BJ (cell line): ENCODE measurements at regions of chr2 and their contacts with region 1.

Region 1: DNA sequence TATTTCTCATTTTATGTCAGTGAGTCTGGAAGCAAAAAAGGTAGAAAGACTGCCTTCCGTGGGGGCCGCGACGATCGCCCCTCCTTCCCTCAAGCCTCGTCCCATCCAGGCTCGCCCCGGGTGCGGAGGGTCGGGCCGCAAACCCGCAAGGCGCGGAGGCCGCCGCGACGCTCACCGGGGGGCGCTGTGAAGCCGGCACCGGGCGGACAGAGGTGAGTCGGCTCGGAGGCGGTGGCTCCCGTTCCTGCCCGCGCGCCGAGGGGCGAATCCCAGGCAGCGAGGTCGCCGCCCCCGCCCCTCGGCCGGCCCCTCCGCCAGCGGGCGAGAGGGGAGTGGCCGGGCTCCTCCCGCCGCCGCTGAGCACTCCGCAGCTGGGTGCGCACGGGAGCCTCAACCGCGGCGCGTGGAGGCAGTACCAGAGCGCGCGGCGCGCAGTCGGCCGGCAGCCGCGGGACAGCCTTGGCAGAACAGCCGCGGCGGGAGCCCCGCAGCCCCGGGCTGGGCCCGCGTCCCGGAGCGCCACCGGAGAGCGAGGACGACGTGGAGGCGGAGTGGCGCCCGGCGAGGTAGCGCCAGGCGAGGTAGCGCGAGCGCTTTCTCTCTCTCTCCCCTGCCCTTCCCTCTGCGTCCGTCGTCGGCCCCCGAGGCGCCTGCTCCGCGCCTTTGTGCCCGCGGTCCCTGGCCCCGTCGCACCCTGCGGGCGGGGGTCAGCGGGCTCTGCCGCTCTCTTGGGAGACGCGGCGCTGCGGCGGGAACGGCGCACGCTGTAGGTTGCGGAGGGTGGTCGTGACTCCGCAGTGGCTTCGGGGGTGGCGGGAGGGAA is at the start of gene MYO1B:
- DNase-seq: no peak
- H3K4me3 ChIP-seq: peak within 1 kb of the TSS; percentile 88
- H3K27me3 ChIP-seq: no peaks in the 10 kb centered on the region
- CTCF ChIP-seq: peak; percentile 47
- polyA plus RNA-seq, gene MYO1B: 87.2 and 122 TPM in 2 replicates

Region 2: DNA sequence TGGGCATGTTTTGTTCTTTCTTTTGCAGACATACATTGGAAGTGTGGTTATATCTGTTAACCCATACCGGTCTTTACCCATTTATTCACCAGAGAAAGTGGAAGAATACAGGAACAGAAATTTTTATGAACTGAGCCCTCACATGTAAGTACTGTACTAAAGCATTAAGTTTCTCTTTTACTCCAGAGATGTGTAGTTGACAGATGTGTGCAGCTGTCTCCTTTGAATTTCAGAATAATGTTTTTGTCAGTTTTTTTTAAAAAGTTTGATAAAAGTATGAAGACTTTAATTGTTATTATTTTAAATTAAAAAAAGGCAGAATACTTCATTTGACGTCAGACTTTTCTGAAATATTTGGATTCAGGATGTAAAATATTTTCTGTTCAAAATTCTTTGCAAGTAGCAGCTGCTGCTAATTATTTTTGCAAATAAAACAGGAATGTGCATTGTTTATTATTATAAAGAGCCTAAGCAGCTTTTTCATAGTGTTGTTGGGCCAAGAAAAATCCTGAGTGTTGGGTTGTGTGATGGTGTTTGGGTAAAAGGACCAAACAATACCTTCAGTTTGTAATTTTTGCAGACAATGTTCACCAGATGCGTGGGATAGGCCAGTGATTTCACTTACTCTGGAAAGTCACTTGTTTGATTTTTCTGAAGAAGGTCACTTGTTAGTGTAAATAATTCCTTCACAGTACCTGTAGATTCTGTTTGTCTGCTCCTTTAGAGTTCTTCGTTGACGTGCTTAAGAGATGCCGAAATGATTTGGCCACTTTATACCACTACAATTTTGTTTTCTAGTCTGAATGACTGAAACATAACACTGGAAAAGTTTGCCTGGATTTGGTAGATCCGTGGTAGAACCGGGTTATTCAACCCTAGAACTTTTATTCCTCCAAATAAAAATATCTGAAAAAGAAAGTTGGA is 51.1 kb after region 1 on chr2:
- CTCF ChIA-PET with region 1: interaction called, 3 read pairs
- POLR2A ChIA-PET with region 1: interaction called, 22 read pairs
- DNase-seq: peak; percentile 52
- H3K4me3 ChIP-seq: no peak overlapping the region
- H3K27me3 ChIP-seq: no peaks in the 10 kb centered on the region
- CTCF ChIP-seq: no peak